Calu3 (cell line): ENCODE measurements at regions of chr1 and their contacts with region 1.

Region 1: GRCh38 chr1:51690285-51690961 is 73.5 kb downstream of the OSBPL9 start:
- DNase-seq: peak; percentile 52
- H3K4me3 Mint-ChIP-seq: peak overlapping the region; percentile 18
- H3K27ac Mint-ChIP-seq: peak overlapping the region; percentile 92
- H3K4me1 Mint-ChIP-seq: peaks cover 70% of the 10 kb centered on the region
- H3K27me3 Mint-ChIP-seq: no peaks in the 10 kb centered on the region
- CTCF ChIP-seq: no peak

Region 2: DNA sequence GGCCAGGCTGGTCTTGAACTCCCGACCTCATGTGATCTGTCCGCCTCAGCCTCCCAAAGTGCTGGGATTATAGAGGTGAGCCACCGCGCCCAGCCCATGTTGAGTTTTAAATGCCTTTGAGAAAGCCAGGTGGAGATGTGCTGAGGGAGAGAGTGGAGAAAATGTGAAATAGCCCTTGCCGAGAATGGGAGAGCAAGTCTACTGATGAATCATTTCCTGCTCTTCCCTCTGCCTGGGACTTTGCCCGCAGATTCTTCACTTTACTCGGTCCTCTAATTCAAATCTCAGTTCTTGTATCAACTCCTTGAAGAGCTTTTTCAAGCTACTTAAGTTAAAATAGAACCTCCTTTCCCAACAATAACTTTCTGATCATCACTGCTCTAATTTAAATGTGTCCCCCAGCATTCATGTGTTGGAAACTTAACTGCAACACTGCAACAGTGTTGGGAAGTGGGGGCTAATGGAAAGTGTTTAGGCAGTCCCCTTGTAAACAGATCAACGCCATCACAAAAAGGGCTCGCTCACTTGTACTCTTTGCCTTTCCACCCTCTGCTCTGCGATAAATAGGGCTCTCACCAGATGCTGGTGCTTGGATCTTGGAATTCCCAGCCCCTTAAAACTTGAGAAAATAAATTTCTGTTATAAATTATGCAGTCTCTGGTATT is 45.8 kb before region 1 on chr1:
- CTCF ChIA-PET with region 1: interaction called, 3 read pairs
- intact Hi-C with region 1: loop called (anchors 1 kb)
- DNase-seq: peak; percentile 15
- H3K4me3 Mint-ChIP-seq: no peak overlapping the region
- H3K27ac Mint-ChIP-seq: peak overlapping the region; percentile 13
- H3K4me1 Mint-ChIP-seq: peaks cover 59% of the 10 kb centered on the region
- H3K27me3 Mint-ChIP-seq: no peaks in the 10 kb centered on the region
- CTCF ChIP-seq: no peak

Region 3: DNA sequence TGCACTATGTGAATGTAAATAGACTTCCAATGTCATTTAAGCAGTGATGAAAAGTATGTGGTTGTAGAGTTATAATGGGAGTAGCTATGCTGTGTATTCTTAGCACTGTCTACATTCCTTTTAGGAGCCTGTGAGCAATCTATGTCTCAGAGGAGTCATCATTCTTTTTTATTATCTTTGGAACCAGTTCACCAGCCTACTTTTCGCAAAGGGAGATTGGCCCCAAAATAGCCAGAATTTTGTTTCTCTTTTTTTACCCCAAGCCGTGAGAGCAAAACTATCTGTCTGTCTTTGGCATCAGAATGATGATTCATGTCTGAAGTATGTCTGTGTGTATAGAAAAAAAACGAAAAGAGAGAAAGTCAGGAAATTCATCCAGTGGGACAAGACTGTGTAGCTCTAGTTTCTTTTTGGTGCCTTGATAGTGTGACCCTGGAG is 29.3 kb before region 1 on chr1:
- CTCF ChIA-PET with region 1: no interaction called
- intact Hi-C with region 1: loop called (anchors 2 kb)
- DNase-seq: no peak
- H3K4me3 Mint-ChIP-seq: no peak overlapping the region
- H3K27ac Mint-ChIP-seq: peak overlapping the region; percentile 76
- H3K4me1 Mint-ChIP-seq: peaks cover 29% of the 10 kb centered on the region
- H3K27me3 Mint-ChIP-seq: no peaks in the 10 kb centered on the region
- CTCF ChIP-seq: no peak